ENCODE measurements at regions of chr6 and their contacts with region 1.

Region 1: DNA sequence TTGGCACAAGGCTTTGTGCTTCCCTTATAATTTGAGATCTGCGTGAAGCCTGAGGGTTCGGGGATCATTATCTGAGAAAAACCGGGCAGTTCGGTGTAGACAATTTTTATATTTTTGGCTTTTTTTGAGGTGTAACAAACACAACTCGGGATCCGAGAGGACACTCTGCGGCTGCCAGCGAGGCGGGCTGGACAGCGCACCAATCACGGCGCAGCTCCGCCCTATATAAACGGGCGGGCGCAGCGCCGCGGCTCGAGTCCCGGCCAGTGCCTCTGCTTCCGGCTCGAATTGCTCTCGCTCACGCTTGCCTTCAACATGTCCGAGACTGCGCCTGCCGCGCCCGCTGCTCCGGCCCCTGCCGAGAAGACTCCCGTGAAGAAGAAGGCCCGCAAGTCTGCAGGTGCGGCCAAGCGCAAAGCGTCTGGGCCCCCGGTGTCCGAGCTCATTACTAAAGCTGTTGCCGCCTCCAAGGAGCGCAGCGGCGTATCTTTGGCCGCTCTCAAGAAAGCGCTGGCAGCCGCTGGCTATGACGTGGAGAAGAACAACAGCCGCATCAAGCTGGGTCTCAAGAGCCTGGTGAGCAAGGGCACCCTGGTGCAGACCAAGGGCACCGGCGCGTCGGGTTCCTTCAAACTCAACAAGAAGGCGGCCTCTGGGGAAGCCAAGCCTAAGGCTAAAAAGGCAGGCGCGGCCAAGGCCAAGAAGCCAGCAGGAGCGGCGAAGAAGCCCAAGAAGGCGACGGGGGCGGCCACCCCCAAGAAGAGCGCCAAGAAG is 69.0 kb downstream of the HFE start:
- DNase-seq: peak; percentile 88 to 97 (median 92)
- H3K4me3 ChIP-seq: peak overlapping the region; percentile 48 to 79 (median 72)
- H3K27ac ChIP-seq: peak overlapping the region; percentile 88 to 97 (median 95)
- H3K4me1 ChIP-seq: peaks cover 6 to 13% of the 10 kb centered on the region in 2 donors
- H3K27me3 ChIP-seq: no peaks in the 10 kb centered on the region
- CTCF ChIP-seq: peak in 1 of 6 experiments; percentile 5
- POLR2A ChIP-seq: peak; percentile 100

Region 2: GRCh38 chr6:26123947-26124780 is 32.1 kb before region 1 on chr6:
- intact Hi-C with region 1: loop called in 1 of 2 experiments (anchors 2 kb)
- DNase-seq: peak in 5 of 7 donors; percentile 82 to 96 (median 87)
- H3K4me3 ChIP-seq: peak overlapping the region; percentile 63 to 79 (median 67)
- H3K27ac ChIP-seq: peak overlapping the region; percentile 94 to 99 (median 97)
- H3K4me1 ChIP-seq: peaks cover 22 to 35% of the 10 kb centered on the region in 2 donors
- H3K27me3 ChIP-seq: no peaks in the 10 kb centered on the region
- CTCF ChIP-seq: no peak
- POLR2A ChIP-seq: peak; percentile 100

Measured in adrenal gland (tissue), 19 donors.